Breast epithelium (tissue), 4 donors: ENCODE measurements at regions of chr15 and their contacts with region 1.

Region 1: DNA sequence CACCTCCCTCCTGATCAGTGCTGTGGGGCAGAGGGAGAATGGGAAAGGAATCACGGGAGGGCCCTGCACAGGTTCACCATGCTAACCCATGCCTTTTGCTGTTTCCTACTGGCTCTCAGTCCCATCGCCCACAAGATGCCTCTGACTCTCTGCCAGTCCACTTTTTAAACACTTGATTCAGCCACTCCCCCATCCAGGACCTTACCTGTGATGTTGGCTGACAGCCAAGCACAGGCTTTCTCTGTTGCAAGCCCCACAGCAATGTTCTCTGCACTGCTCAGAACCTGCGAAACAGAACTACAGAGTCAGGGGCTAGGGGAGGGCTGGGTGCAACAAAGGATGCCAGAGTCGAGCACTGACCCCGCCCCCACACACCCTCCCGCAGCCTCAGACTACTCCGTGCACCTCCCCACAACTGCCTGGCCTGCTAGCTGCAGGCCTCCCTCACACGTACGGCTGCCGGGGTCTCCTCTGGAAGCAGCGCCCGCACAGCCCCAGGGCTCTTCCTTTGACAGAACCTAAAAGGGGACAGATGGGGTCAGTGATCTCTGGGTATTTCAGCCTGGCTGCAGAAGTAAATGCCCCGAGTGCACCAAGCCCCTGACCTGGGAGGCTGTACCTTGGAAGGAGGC is 9.1 kb downstream of the CDAN1 start:
- DNase-seq: no peak
- H3K4me3 ChIP-seq: no peak overlapping the region
- H3K27ac ChIP-seq: no peak overlapping the region
- H3K4me1 ChIP-seq: no peaks in the 10 kb centered on the region
- H3K27me3 ChIP-seq: no peaks in the 10 kb centered on the region
- CTCF ChIP-seq: no peak
- POLR2A ChIP-seq: no peak

Region 2: DNA sequence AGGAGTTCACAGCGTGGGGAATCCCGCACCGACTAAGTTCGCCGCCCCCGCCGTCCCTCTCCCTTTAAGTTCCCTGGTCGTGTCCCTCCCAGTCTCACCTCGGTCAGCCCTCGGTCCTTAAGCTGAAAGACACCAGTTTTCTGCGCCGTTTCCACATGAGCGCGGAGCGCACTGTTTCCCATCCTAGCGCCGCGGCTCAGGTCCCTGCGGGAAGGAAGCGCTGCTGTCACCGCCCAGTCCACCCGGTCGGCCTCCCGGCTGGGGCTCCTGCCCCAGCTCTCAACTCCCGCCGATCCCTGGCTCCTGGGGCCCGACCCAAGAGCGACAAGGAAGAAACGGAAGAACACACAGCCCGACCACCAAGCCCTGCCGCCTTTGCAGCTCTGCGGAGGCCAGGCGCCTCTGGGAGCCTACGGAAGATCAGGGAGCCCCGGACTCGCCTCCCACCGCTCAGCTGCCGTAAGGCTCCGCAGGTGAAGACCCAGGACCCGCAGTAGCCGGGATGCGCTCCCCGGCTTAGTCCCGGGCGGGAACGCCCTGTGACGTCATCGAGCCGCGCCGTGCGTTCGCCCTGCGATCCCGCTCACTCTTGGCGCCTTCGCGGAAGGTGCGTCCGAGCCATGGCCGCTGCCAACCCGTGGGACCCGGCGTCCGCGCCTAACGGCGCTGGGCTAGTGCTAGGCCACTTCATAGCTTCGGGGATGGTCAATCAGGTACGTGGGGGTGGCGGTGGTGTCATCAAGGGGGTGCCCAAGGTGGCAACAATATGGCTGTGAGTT is 179.4 kb before region 1 on chr15 and contains the starts of genes HAUS2 and LRRC57:
- intact Hi-C with region 1: loop called (anchors 5 kb)
- DNase-seq: peak; percentile 71 to 87
- H3K4me3 ChIP-seq: peak within 1 kb of the TSS; percentile 72 to 87 (median 82)
- H3K27ac ChIP-seq: peak within 1 kb of the TSS; percentile 87 to 95
- H3K4me1 ChIP-seq: peaks cover 6 to 13% of the 10 kb centered on the region in 2 donors
- H3K27me3 ChIP-seq: no peaks in the 10 kb centered on the region
- CTCF ChIP-seq: peak in 1 of 3 donors; percentile 31
- POLR2A ChIP-seq: peak; percentile 92
- total RNA-seq, gene HAUS2: 29.3 to 42.1 (median 30.2) TPM
- total RNA-seq, gene LRRC57: 20.3 to 23.3 (median 23.3) TPM

Region 3: DNA sequence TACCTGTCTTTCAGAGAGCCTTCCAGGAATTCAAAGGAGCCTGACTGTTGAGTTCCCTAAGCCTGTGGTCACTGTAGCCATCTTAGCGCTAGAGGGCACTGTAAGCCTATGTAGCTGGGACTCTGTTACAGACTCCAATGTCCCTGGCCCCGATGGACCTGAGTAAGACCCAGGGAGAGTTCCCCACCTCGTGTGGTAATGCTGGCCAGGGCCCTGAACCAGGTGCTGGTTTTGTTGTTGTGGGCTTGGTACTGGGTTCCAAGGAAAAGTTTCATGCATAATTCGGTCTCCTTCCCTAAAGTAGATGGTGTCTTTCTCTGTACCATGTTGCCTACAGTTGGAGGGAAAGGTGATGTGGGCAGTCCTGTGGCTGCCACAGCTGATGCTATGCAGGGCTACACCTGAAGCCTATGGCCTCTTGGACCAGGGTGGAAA is 23.4 kb before region 1 on chr15:
- intact Hi-C with region 1: no loop called
- DNase-seq: peak; percentile 33 to 65
- H3K4me3 ChIP-seq: no peak overlapping the region
- H3K27ac ChIP-seq: no peak overlapping the region
- H3K4me1 ChIP-seq: no peaks in the 10 kb centered on the region
- H3K27me3 ChIP-seq: no peaks in the 10 kb centered on the region
- CTCF ChIP-seq: peak in 2 of 3 donors; percentile 72
- POLR2A ChIP-seq: no peak

Region 4: GRCh38 chr15:42716626-42717025 is 11.2 kb before region 1 on chr15:
- intact Hi-C with region 1: no loop called
- DNase-seq: no peak
- H3K4me3 ChIP-seq: no peak overlapping the region
- H3K27ac ChIP-seq: no peak overlapping the region
- H3K4me1 ChIP-seq: no peaks in the 10 kb centered on the region
- H3K27me3 ChIP-seq: no peaks in the 10 kb centered on the region
- CTCF ChIP-seq: no peak
- POLR2A ChIP-seq: no peak

Region 5: GRCh38 chr15:43029476-43029875 is 301.6 kb after region 1 on chr15:
- intact Hi-C with region 1: no loop called
- DNase-seq: no peak
- H3K4me3 ChIP-seq: no peak overlapping the region
- H3K27ac ChIP-seq: no peak overlapping the region
- H3K4me1 ChIP-seq: no peaks in the 10 kb centered on the region
- H3K27me3 ChIP-seq: no peaks in the 10 kb centered on the region
- CTCF ChIP-seq: no peak
- POLR2A ChIP-seq: no peak